Tibial artery (tissue), 4 donors: ENCODE measurements at regions of chr1 and their contacts with region 1.

Region 1: GRCh38 chr1:39105061-39105840 is 79.1 kb downstream of the NDUFS5 start:
- DNase-seq: peak; percentile 77 to 91
- H3K4me3 ChIP-seq: peak overlapping the region; percentile 61 to 72
- H3K27ac ChIP-seq: peak overlapping the region; percentile 87 to 92
- H3K4me1 ChIP-seq: peaks cover 0 to 61% (median 51%) of the 10 kb centered on the region in 4 donors
- H3K27me3 ChIP-seq: no peaks in the 10 kb centered on the region
- CTCF ChIP-seq: no peak

Region 2: GRCh38 chr1:37978541-37978940 is 1126.7 kb before region 1 on chr1:
- intact Hi-C with region 1: no loop called
- DNase-seq: no peak
- H3K4me3 ChIP-seq: no peak overlapping the region
- H3K27ac ChIP-seq: no peak overlapping the region
- H3K4me1 ChIP-seq: no peaks in the 10 kb centered on the region
- H3K27me3 ChIP-seq: no peaks in the 10 kb centered on the region
- CTCF ChIP-seq: no peak

Region 3: GRCh38 chr1:39189592-39190041 is 84.4 kb after region 1 on chr1:
- intact Hi-C with region 1: loop called (anchors 5 kb)
- DNase-seq: no peak
- H3K4me3 ChIP-seq: no peak overlapping the region
- H3K27ac ChIP-seq: peak overlapping the region; percentile 23 to 79
- H3K4me1 ChIP-seq: peaks cover 0 to 70% (median 33%) of the 10 kb centered on the region in 4 donors
- H3K27me3 ChIP-seq: no peaks in the 10 kb centered on the region
- CTCF ChIP-seq: no peak